AG04449 (cell line): ENCODE measurements at regions of chr12 and their contacts with region 1.

Region 1: GRCh38 chr12:49244176-49244575 is 20.7 kb upstream of the TUBA1C start:
- DNase-seq: peak; percentile 62
- H3K4me3 ChIP-seq: no peak overlapping the region
- CTCF ChIP-seq: no peak

Region 2: DNA sequence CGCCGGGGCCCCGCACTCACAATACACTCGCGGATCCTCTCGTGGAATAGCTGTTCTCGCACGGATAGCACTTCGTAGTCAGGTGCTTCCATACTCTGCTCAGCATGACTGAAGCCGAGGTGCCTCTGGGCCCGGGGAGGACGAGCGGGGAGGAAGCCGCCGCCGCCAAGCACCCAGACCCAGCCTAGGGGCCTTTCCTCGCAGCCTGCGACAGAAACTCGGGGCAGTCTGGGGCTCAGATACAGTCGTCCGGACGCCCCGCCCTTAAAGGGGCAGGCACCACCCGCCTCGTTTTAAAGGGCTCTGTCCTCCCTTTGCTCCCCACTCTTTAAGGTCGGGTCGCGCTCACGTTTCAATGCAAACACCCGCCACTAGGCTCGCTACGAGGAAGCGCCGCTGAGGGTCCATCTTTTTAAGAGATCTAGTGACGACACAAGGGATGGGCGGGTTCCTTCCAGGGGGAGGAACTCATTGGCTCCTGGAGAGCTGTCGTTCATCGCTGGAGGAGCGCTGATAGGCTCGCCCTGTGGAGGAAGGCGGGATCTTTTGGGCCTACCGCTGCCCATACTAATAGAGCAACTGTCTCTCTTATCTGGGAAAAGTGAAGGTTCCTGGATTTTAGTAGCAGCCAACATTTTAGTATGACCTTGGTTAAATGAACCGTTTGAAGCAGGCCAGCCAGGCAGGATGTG is 133.6 kb before region 1 on chr12 and contains the start of gene LMBR1L:
- CTCF ChIA-PET with region 1: interaction called, 10 read pairs
- POLR2A ChIA-PET with region 1: interaction called, 4 read pairs
- DNase-seq: peak; percentile 88
- H3K4me3 ChIP-seq: peak within 1 kb of the TSS; percentile 87
- CTCF ChIP-seq: peak; percentile 62

Region 3: DNA sequence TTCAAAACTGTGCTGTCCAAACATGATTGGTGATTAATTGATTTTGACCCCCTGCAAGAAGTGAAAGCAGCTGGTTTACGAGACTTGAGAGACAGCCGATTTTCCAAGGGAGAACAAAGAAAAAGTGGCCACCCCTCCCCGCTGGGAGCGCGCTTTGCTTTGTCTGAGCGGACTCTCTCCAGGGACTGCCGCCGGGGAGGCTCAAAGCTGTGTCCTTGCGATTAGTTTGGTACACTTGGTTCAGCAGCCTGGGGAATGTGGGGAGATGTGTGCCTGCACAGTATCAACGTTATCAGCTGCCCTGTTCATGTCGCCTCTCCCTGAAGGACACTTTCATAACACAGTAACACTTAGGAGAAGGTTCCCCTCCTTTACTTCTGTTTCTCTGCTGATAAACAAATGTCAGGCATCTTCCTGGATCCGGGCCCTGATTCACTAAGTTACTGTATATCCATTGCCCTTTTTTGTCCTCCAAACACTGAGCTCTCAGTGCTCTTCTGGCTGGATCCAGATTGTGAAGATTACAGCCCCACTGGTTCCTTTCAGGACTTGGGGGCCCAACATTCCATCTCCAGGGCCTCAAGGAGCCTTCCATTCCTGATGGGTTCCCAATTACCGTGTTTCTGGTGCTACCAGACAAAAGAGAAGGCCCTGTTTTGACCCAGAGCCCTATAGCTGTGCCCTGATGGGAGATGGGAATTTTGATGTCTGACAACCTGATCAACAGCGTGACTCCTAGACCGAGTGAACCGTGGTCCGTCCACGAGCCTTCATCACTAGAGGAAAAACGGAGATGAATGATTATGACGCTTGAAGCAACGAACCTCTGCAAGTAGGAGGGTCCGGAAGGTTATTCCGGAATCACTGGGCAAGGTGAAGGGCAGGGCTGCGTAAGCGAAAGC is 11.0 kb before region 1 on chr12:
- CTCF ChIA-PET with region 1: interaction called, 109 read pairs
- POLR2A ChIA-PET with region 1: no interaction called
- DNase-seq: no peak
- H3K4me3 ChIP-seq: peak overlapping the region; percentile 1
- CTCF ChIP-seq: peak; percentile 16

Region 4: GRCh38 chr12:49264738-49265515 is 20.8 kb after region 1 on chr12 and contains the start of gene TUBA1C:
- CTCF ChIA-PET with region 1: interaction called, 11 read pairs
- POLR2A ChIA-PET with region 1: interaction called, 10 read pairs
- DNase-seq: no peak
- H3K4me3 ChIP-seq: peak within 1 kb of the TSS; percentile 94
- CTCF ChIP-seq: no peak